Activated T-helper 2 cell treated with anti-CD3 and anti-CD28 coated beads, Interferon-gamma antibody, Interleukin-2, Interleukin-4, amounts not matched to agents 10 μg/mL and 5 μg/mL and 100 μg/mL, durations not matched to agents 14 hours and 24 hours and 36 hours (primary cell): ENCODE measurements at regions of chr1 and their contacts with region 1.

Region 1: GRCh38 chr1:200907611-200908097 is 13.0 kb downstream of the INAVA start:
- DNase-seq: no peak
- H3K4me3 Mint-ChIP-seq: no peak overlapping the region
- H3K27ac Mint-ChIP-seq: no peak overlapping the region
- H3K4me1 Mint-ChIP-seq: peaks cover 4% of the 10 kb centered on the region
- H3K27me3 Mint-ChIP-seq: peaks cover 38% of the 10 kb centered on the region

Region 2: DNA sequence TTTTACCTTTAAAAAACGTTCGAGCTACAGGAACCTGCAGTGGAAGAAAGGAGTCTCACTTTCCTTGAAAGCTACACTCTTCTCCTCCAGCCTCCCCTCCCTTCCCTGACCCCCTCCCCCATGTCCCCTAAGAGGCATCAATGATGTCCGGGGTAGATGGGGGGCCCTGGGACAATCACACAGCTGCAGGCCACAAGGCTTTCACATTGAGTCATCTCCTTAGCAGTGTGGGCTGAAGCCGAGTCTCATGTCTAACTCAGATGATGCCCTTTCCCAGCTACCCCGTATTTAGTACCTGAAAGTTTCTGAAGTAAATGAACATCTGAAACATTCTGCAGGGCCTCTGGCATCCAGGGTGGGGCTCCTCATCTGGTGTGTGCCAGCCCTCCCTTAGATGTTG is 41.1 kb before region 1 on chr1:
- intact Hi-C with region 1: loop called (anchors 5 kb)
- DNase-seq: no peak
- H3K4me3 Mint-ChIP-seq: no peak overlapping the region
- H3K27ac Mint-ChIP-seq: no peak overlapping the region
- H3K4me1 Mint-ChIP-seq: peaks cover 24% of the 10 kb centered on the region
- H3K27me3 Mint-ChIP-seq: peaks cover 50% of the 10 kb centered on the region